ENCODE measurements at regions of chr1 and their contacts with region 1.

Region 1: DNA sequence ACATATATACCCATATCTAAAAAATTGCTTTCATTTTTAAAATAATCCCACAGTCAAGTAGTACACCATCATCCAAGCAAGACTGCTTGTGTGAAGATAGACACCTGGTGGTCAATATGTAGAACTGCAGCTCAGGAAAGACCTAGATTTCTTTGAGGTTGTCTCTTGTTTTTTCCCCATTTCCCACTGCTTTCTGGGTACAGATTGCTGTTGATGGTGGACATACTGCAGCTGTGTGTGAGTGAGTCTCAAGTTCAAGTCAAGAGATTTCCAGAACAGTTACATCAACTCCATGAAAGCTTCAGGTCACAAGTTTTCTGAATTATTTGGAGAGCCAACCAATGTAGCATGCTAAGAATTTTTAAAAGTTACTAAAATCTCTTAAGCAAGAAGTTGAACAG is 306.4 kb downstream of the DUSP10 start:
- DNase-seq: no peak
- H3K4me3 Mint-ChIP-seq: no peak overlapping the region
- H3K27ac Mint-ChIP-seq: no peak overlapping the region
- H3K4me1 Mint-ChIP-seq: peaks cover 31% of the 10 kb centered on the region
- H3K27me3 Mint-ChIP-seq: peaks cover 9% of the 10 kb centered on the region

Region 2: DNA sequence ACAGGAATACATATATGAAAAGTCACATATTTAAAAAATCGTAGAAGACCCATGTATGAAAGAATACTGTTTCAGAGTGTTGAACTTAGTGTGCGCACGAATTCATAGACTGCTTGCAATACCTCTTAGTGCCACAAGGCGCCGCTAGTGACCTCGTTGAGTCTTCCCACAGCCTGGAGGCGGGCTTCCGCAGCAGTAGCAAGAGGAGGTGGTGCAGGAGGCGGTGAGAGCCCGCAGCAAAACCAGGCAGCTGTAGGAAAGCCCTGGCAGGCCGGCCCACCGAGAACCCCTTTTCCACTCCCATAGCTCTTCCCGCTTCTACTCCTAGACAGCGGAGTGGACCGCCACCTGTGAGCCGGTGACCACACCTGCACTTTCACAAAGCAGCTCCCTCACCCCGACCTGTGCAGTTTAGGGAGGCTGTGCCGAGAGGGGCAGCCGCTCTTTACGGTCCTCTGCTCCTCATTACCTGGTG is 625.3 kb before region 1 on chr1:
- intact Hi-C with region 1: loop called (anchors 1 kb)
- DNase-seq: peak; percentile 53
- H3K4me3 Mint-ChIP-seq: peak overlapping the region; percentile 30
- H3K27ac Mint-ChIP-seq: no peak overlapping the region
- H3K4me1 Mint-ChIP-seq: peaks cover 5% of the 10 kb centered on the region
- H3K27me3 Mint-ChIP-seq: no peaks in the 10 kb centered on the region

Region 3: DNA sequence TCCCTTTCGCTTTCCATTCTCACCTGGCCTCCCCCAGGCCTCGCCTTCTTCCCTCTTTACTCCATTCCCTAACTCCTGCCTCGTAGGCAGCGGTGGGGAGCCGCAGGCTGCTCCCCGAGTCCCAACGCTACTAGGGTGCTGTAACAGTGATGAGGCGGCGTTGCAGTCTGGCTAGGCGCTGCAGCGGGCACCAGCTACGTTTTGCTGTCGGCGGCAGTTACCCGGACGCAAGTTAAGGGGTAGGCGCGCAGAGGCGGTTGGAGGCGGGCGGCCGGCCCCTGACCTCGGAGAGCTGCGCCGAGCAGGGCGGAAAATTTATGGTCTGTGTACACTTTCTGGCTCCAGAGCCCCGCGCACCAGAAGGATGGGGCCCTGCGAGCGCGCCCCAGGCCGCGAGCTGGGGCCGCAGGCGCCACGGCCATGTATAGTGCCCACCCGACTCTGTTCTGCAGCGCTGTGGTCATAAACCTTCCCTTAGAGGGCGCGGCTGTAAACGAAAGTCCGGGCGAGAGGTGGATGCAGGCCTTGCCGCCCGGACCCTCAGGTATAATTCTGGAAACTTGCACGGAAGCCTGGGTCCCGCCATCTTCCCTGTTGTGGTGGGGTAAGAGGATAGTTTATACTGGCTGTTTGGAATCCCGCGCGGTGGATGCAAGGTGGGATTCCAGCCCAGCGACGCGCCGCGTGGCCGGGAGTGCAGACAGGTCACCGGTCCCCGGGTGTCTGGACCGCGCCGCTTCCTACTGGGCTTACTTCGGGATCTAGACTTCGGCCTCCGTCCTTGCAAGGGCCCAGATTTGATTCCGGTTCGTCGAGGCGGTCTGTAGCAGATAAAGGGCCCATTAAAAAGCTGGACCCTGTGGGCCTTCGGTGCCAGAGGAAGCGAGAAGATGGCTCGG is 541.2 kb before region 1 on chr1:
- intact Hi-C with region 1: loop called (anchors 5 kb)
- DNase-seq: no peak
- H3K4me3 Mint-ChIP-seq: peak overlapping the region; percentile 49
- H3K27ac Mint-ChIP-seq: no peak overlapping the region
- H3K4me1 Mint-ChIP-seq: peaks cover 12% of the 10 kb centered on the region
- H3K27me3 Mint-ChIP-seq: peaks cover 68% of the 10 kb centered on the region

Region 4: GRCh38 chr1:221263831-221264767 is 171.4 kb before region 1 on chr1:
- intact Hi-C with region 1: loop called (anchors 2 kb)
- DNase-seq: peak; percentile 13
- H3K4me3 Mint-ChIP-seq: no peak overlapping the region
- H3K27ac Mint-ChIP-seq: no peak overlapping the region
- H3K4me1 Mint-ChIP-seq: no peaks in the 10 kb centered on the region
- H3K27me3 Mint-ChIP-seq: no peaks in the 10 kb centered on the region

Region 5: DNA sequence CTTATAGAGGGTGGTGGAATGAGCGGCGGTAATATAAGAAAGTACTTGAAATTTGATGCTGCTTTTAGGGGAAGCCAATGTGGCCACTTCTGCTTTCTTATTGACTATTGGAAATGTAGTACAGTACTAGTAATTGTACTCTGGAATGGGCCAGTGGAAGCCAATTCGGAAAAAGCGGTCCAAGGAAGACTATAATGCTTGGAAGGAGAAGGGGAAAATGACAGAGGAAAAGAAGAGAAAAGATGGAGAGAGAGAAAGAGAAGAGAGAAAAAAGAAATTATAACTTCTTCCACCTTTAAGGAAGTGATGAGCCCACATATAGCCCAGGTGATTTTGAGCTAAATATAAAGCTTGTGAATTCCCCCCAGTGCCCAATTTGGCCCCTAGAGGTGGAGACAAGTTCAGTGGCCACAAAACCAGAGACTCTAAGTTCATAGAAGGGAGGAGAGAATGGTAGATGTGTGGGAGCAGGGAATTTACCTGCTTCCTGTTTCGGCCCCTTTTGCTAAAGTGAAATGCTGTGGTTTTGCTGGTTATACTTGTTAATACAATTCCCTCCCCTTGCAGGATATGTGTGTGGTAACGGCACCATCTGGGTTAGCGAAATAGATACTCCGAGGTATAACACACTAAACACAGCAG is 342.0 kb after region 1 on chr1:
- intact Hi-C with region 1: loop called (anchors 1 kb)
- DNase-seq: peak; percentile 37
- H3K4me3 Mint-ChIP-seq: peak overlapping the region; percentile 48
- H3K27ac Mint-ChIP-seq: peak overlapping the region; percentile 92
- H3K4me1 Mint-ChIP-seq: peaks cover 78% of the 10 kb centered on the region
- H3K27me3 Mint-ChIP-seq: no peaks in the 10 kb centered on the region

Region 6: GRCh38 chr1:222455188-222455879 is 1019.8 kb after region 1 on chr1:
- intact Hi-C with region 1: loop called (anchors 10 kb)
- DNase-seq: peak; percentile 68
- H3K4me3 Mint-ChIP-seq: no peak overlapping the region
- H3K27ac Mint-ChIP-seq: no peak overlapping the region
- H3K4me1 Mint-ChIP-seq: no peaks in the 10 kb centered on the region
- H3K27me3 Mint-ChIP-seq: peaks cover 5% of the 10 kb centered on the region